ENCODE measurements at regions of chr4 and their contacts with region 1.

Region 1: GRCh38 chr4:56655209-56655626 is 25.9 kb downstream of the HOPX start:
- DNase-seq: peak; percentile 80
- H3K4me3 ChIP-seq: peak overlapping the region; percentile 48 to 81 (median 60)
- H3K27ac ChIP-seq: peak overlapping the region; percentile 59 to 96 (median 89)
- H3K4me1 ChIP-seq: peaks cover 0 to 58% (median 51%) of the 10 kb centered on the region in 4 donors
- H3K27me3 ChIP-seq: peaks cover 0 to 7% (median 0%) of the 10 kb centered on the region in 3 donors
- CTCF ChIP-seq: no peak
- EP300 ChIP-seq: no peak
- POLR2A ChIP-seq: peak in 1 of 2 donors; percentile 64

Region 2: DNA sequence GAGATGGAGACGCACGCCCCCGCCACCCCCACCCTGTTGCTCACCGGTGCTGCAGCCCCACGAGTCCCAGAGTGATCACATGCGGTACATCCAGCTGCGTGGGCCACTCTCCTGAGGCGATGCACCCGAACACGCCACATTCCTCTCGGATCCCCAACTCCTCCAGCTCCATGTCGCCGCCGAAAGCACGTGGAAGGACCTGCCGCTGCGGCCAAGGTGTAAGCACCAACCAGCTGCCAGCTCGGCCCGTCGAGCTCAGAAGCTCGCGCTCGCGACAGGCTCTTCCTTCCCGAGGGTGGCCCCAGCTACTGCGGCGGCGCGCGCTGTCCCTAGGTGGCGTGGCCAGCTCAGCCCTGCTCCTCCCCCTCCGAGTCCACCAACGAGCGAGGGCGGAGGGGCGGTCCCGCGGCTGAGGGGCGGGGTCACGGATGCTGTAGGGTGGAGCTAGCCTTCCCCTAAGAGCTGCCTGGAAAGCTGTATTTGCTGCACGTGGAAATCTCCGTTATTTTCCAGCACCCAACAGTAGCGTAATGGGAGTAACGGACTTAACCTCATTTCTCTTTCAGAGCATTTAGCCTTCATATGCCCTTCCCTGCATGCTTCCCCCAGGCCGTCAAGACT is 219.8 kb before region 1 on chr4 and contains the start of gene PPAT:
- intact Hi-C with region 1: loop called (anchors 10 kb)
- DNase-seq: peak; percentile 99
- H3K4me3 ChIP-seq: peak within 1 kb of the TSS; percentile 50 to 77 (median 70)
- H3K27ac ChIP-seq: peak within 1 kb of the TSS; percentile 97 to 98 (median 98)
- H3K4me1 ChIP-seq: peaks cover 0 to 33% (median 26%) of the 10 kb centered on the region in 4 donors
- H3K27me3 ChIP-seq: no peaks in the 10 kb centered on the region
- CTCF ChIP-seq: peak in 2 of 4 experiments; percentile 31 to 35
- EP300 ChIP-seq: no peak
- POLR2A ChIP-seq: peak; percentile 28 to 30
- total RNA-seq, gene PPAT: 4.2 to 6.3 (median 5.1) TPM

Region 3: GRCh38 chr4:56575820-56576429 is 79.3 kb before region 1 on chr4:
- intact Hi-C with region 1: loop called (anchors 2 kb)
- DNase-seq: no peak
- H3K4me3 ChIP-seq: no peak overlapping the region
- H3K27ac ChIP-seq: peak overlapping the region in 2 of 4 donors; percentile 43 to 53
- H3K4me1 ChIP-seq: peaks cover 0 to 11% (median 5%) of the 10 kb centered on the region in 4 donors
- H3K27me3 ChIP-seq: no peaks in the 10 kb centered on the region
- CTCF ChIP-seq: peak; percentile 42 to 72 (median 64)
- EP300 ChIP-seq: no peak
- POLR2A ChIP-seq: no peak

Region 4: DNA sequence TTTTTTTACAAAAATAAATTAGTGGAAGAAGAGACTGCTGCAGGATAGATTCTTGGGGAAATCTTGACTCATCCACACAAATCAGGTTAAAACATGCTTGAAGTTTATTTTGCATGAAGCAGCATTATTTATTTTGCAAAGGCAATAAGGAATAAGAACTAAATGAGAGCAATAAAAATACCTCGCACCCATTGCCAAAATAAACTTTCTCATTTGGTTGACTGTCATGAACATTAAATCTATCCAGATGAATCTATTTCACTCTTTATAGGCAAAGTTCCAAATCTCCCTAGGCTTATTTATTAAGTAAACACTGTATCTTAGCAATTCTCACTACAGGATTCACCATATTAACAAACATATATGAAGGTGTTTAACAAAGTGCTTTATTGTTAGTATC is 33.0 kb before region 1 on chr4:
- intact Hi-C with region 1: loop called (anchors 5 kb)
- DNase-seq: no peak
- H3K4me3 ChIP-seq: no peak overlapping the region
- H3K27ac ChIP-seq: peak overlapping the region in 1 of 4 donors; percentile 44
- H3K4me1 ChIP-seq: peaks cover 0 to 35% (median 27%) of the 10 kb centered on the region in 4 donors
- H3K27me3 ChIP-seq: no peaks in the 10 kb centered on the region
- CTCF ChIP-seq: no peak
- EP300 ChIP-seq: no peak
- POLR2A ChIP-seq: no peak

Region 5: DNA sequence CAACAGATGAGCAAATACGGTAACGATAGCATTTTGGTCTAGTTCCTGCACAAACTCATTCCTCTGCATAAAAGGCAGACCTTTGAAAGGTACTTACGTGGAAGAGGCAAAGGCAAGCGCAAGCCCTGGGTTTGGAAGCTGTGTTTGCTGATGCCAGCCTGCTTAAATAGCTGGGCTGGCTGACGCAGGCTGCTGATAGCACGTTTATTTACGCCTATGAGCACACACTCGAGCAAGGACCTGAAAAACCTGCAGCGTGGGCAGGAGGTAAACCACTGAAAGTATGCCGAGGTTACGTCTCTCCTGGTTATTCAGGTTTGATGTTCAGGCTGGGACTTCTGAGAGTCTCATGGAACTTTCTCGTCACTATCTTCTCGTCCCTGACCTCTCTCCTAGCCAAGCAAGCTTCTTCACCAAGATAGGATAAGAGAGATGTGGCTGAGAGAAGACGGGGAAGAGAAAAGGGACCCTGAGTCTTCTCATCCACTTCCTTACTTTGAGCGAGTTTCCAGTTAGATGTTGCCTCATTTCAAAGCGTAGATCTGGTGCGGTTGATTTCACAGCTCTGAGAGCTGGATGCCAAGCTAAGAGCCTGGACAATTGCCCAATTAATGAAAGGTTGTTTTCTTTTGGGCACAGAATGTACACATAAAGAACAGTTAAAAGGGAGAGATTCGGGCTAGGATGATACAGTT is 26.1 kb after region 1 on chr4 and contains the start of gene HOPX:
- intact Hi-C with region 1: no loop called
- DNase-seq: no peak
- H3K4me3 ChIP-seq: peak within 1 kb of the TSS in 2 of 4 donors; percentile 7 to 36
- H3K27ac ChIP-seq: no peak within 1 kb of the TSS
- H3K4me1 ChIP-seq: peaks cover 0 to 23% (median 7%) of the 10 kb centered on the region in 4 donors
- H3K27me3 ChIP-seq: no peaks in the 10 kb centered on the region
- CTCF ChIP-seq: no peak
- EP300 ChIP-seq: no peak
- POLR2A ChIP-seq: no peak
- total RNA-seq, gene HOPX: 24.7 to 57.9 (median 47.1) TPM

Region 6: DNA sequence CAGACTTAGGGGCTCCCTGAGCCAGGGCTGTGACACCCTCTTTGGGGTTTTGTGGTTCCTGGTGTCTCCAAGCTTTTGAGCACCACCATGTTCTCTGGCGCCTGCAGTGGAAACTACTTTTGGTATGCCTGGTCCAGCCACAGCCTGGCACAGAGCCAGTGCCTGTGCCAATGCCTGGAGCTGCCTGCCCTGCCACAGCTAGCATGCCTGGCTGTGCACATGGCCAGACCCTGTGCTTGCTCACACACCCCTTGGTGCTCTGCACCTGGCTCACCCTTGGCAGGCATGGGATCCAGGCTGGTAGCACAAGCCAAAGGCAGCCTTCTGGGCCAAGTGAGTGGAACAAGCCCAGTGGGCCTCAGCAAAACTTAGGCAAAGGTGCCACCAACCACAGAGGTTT is 56.8 kb after region 1 on chr4:
- intact Hi-C with region 1: no loop called
- DNase-seq: no peak
- H3K4me3 ChIP-seq: no peak overlapping the region
- H3K27ac ChIP-seq: no peak overlapping the region
- H3K4me1 ChIP-seq: no peaks in the 10 kb centered on the region
- H3K27me3 ChIP-seq: no peaks in the 10 kb centered on the region
- CTCF ChIP-seq: no peak
- EP300 ChIP-seq: no peak
- POLR2A ChIP-seq: no peak

Region 7: GRCh38 chr4:56728512-56728911 is 73.3 kb after region 1 on chr4:
- intact Hi-C with region 1: loop called (anchors 1 kb)
- DNase-seq: peak; percentile 96
- H3K4me3 ChIP-seq: no peak overlapping the region
- H3K27ac ChIP-seq: peak overlapping the region; percentile 63 to 79 (median 71)
- H3K4me1 ChIP-seq: peaks cover 0 to 21% (median 12%) of the 10 kb centered on the region in 4 donors
- H3K27me3 ChIP-seq: no peaks in the 10 kb centered on the region
- CTCF ChIP-seq: no peak
- EP300 ChIP-seq: peak; percentile 90 to 99 (median 98)
- POLR2A ChIP-seq: no peak

Region 8: GRCh38 chr4:56799824-56800756 is 144.9 kb after region 1 on chr4:
- intact Hi-C with region 1: loop called (anchors 2 kb)
- DNase-seq: peak; percentile 93
- H3K4me3 ChIP-seq: peak overlapping the region; percentile 46 to 64 (median 56)
- H3K27ac ChIP-seq: peak overlapping the region; percentile 70 to 81 (median 78)
- H3K4me1 ChIP-seq: peaks cover 0 to 21% (median 20%) of the 10 kb centered on the region in 4 donors
- H3K27me3 ChIP-seq: no peaks in the 10 kb centered on the region
- CTCF ChIP-seq: peak; percentile 77 to 92 (median 87)
- EP300 ChIP-seq: no peak
- POLR2A ChIP-seq: no peak

Region 9: DNA sequence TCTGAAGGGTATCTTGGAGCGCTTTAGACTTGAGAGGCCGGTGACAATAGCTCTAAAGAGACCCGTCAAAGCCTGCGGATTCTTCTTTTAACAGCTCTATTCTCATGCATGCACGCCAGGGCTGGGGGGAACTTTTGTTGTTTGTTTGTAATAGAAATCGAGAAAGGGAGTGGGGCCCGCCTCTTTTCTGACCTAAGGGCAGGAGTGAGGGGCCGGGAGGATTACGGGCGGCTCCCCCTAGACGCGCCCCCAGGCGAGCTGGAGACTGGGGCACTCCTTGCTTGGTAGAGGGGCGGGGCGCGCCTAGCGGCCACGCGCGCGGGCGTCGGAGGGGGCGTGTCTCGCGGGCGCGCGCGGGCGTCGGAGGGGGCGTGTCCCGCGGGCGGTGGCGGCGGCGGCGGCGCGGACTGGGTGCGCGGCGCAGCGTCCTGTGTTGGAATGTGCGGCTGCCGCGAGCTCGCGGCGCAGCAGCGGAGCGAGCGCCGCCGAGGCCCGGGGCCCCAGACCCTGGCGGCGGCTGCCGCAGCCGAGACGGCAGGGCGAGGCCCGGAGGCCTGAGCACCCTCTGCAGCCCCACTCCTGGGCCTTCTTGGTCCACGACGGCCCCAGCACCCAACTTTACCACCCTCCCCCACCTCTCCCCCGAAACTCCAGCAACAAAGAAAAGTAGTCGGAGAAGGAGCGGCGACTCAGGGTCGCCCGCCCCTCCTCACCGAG is 252.4 kb after region 1 on chr4 and contains the start of gene REST:
- intact Hi-C with region 1: loop called (anchors 5 kb)
- DNase-seq: peak; percentile 87
- H3K4me3 ChIP-seq: peak within 1 kb of the TSS; percentile 75 to 98 (median 94)
- H3K27ac ChIP-seq: peak within 1 kb of the TSS; percentile 89 to 97 (median 95)
- H3K4me1 ChIP-seq: peaks cover 0 to 30% (median 27%) of the 10 kb centered on the region in 4 donors
- H3K27me3 ChIP-seq: no peaks in the 10 kb centered on the region
- CTCF ChIP-seq: no peak
- EP300 ChIP-seq: no peak
- POLR2A ChIP-seq: no peak
- total RNA-seq, gene REST: 23.7 to 32.8 (median 26.3) TPM

Measured in sigmoid colon (tissue), 7 donors.